Spleen (tissue), 13 donors: ENCODE measurements at regions of chr2 and their contacts with region 1.

Region 1: DNA sequence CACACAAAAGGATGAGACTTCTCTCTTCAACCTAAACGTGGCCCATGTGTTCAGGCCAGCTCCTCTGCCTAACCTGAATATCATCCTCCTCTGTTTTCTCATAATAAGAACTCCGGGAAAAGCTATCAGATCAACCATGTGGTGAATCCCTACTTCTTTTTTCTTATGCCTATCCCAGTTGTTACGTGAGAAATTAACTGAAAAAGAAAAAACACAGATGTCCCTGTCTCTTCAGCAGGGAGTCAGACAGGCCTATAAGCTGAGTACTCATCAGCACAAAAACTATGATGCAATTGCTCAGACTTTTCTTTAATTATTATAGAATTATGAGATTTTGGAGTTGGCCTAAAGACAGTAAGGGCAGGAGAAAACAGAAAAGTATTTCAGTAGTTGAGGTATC is 613.0 kb upstream of the FSHR start:
- DNase-seq: no peak
- H3K4me3 ChIP-seq: no peak overlapping the region
- H3K27ac ChIP-seq: no peak overlapping the region
- H3K4me1 ChIP-seq: no peaks in the 10 kb centered on the region
- H3K27me3 ChIP-seq: no peaks in the 10 kb centered on the region
- CTCF ChIP-seq: no peak
- POLR2A ChIP-seq: no peak

Region 2: DNA sequence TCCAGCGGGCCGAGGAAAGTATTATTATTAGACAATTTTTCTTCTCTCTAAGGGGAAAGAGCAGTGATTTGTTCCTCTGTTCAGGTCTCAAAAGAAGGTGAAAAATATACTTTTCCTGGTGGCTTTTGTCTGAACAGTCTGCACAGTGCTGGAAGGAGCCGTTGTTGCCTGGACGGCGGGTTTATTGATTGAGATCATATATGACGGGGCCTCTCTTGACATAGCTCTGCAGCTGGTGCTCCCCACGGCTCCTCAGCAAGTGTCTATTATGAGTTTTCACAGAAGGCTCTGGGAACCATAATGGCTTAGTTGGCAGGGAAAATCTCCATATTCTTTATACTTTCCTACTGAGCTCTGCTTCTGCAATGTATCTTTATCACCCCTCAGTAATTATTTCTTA is 655.9 kb before region 1 on chr2:
- intact Hi-C with region 1: no loop called
- DNase-seq: no peak
- H3K4me3 ChIP-seq: no peak overlapping the region
- H3K27ac ChIP-seq: no peak overlapping the region
- H3K4me1 ChIP-seq: no peaks in the 10 kb centered on the region
- H3K27me3 ChIP-seq: no peaks in the 10 kb centered on the region
- CTCF ChIP-seq: no peak
- POLR2A ChIP-seq: no peak

Region 3: DNA sequence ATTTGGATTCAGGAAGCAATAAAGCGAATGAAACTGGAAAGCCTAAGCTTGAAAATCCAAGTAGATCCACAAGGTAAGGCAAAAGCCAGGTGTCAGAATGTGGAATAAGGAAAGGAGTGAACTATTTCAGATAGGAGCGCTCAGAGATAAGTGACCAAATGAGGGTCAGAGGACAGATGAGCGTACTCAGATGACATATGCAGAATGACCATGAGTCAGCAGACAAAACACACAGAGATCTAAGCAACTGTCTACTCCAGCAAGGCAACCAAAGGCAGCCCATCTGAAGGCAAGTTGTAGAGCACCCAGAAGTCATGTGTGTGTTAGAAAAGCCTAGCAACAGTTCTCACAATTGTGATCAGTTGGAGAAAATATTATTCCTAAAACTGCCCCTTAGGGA is 64.6 kb before region 1 on chr2:
- intact Hi-C with region 1: loop called (anchors 2 kb)
- DNase-seq: no peak
- H3K4me3 ChIP-seq: no peak overlapping the region
- H3K27ac ChIP-seq: no peak overlapping the region
- H3K4me1 ChIP-seq: no peaks in the 10 kb centered on the region
- H3K27me3 ChIP-seq: no peaks in the 10 kb centered on the region
- CTCF ChIP-seq: no peak
- POLR2A ChIP-seq: no peak

Region 4: GRCh38 chr2:49714454-49714853 is 52.9 kb before region 1 on chr2:
- intact Hi-C with region 1: no loop called
- DNase-seq: no peak
- H3K4me3 ChIP-seq: no peak overlapping the region
- H3K27ac ChIP-seq: no peak overlapping the region
- H3K4me1 ChIP-seq: no peaks in the 10 kb centered on the region
- H3K27me3 ChIP-seq: no peaks in the 10 kb centered on the region
- CTCF ChIP-seq: no peak
- POLR2A ChIP-seq: no peak